Mammary epithelial cell (primary cell): ENCODE measurements at regions of chrX and their contacts with region 1.

Region 1: DNA sequence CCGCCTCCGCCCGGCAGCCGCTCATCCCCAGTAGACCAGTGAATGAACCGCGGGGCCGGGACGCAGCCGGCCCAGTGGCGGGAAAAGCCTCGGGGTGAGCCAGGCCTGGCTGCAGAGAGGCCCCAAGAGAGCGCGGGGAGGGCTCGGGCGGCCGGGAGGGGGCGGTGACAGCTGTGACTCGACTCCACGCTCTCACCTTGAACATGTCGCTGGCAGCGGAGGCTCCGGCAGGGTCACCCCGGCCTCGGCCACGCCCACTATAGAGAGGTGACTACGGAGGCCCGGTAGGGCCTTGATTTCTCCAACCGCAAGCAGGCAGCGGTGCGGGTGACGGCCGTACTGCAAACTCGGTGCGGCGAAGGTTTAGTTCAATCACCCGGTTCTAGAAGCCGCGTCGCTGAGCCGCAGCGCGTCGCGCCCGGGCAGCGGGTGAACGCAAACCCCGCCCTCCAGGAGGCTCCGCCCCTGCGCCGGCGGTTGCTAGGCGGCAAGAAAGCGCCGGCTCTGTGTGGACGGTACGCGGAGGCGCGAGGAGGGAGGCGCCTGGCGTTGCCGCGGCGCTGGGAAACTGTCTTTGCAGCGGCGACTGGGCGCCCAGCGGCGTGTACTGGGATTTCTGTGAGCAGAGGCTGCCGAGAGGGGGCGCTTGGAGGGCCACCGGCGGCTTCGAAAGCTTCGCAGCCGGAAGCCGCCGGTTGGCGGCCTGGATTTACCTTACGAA is at the starts of genes APOO and CXorf58:
- DNase-seq: peak; percentile 90
- H3K4me3 ChIP-seq: peak within 1 kb of the TSS; percentile 56 to 57 (median 56)
- H3K27ac ChIP-seq: peak within 1 kb of the TSS; percentile 61
- H3K4me1 ChIP-seq: no peaks in the 10 kb centered on the region
- H3K27me3 ChIP-seq: no peaks in the 10 kb centered on the region
- CTCF ChIP-seq: peak; percentile 33 to 76
- total RNA-seq, gene APOO: 7.2 to 37.9 TPM
- total RNA-seq, gene CXorf58: 0.17 TPM in 1 of 2 donors, not detected in the other

Region 2: DNA sequence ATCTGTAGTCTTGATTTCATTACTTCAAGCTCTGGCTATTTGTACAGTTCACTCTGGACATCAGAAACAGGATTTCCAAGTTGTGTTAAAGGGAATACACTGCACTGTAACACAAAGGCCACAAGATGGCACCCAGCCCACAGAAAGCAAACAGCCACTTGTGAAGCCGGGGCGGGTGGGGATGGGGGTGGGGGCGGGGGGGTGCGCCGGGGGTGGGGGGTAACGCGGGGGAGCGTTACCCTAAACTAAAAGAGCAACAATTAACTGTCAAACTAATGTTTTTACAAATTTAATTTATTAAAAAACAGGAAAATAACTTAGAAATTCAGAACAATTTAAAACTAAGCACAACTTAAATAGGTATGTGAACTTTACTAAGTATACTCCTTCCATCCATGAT is 213.1 kb before region 1 on chrX:
- CTCF ChIA-PET with region 1: no interaction called
- dilution Hi-C with region 1: no loop called
- in situ Hi-C with region 1: loop called (anchors 5 to 10 kb)
- intact Hi-C with region 1: no loop called
- DNase-seq: peak; percentile 30
- H3K4me3 ChIP-seq: no peak overlapping the region
- H3K27ac ChIP-seq: no peak overlapping the region
- H3K4me1 ChIP-seq: no peaks in the 10 kb centered on the region
- H3K27me3 ChIP-seq: no peaks in the 10 kb centered on the region
- CTCF ChIP-seq: peak; percentile 53 to 61

Region 3: DNA sequence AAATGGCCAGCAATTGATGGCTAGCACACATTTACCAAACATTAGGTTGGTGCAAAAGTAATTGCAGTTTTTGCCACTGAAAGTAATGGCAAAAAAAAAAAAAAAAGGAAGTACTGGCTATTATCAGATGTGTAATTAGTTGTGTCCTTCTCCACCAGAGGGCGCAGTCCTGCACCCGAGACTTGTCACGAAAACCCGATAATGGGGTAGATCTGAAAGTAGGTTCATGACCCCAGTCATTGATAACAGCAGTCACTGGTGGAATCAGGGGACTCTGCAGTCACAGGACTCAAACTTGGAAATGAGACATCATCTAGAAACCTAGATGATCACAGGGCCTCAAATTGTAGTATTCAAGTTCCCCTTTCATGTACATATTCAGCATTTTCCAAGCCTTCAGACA is 151.5 kb before region 1 on chrX:
- CTCF ChIA-PET with region 1: no interaction called
- dilution Hi-C with region 1: no loop called
- in situ Hi-C with region 1: loop called in 1 of 2 experiments (anchors 10 kb)
- intact Hi-C with region 1: no loop called
- DNase-seq: peak; percentile 37
- H3K4me3 ChIP-seq: no peak overlapping the region
- H3K27ac ChIP-seq: no peak overlapping the region
- H3K4me1 ChIP-seq: no peaks in the 10 kb centered on the region
- H3K27me3 ChIP-seq: no peaks in the 10 kb centered on the region
- CTCF ChIP-seq: peak; percentile 58 to 66

Region 4: GRCh38 chrX:23896981-23897380 is 10.7 kb before region 1 on chrX:
- CTCF ChIA-PET with region 1: no interaction called
- dilution Hi-C with region 1: no loop called
- in situ Hi-C with region 1: no loop called
- intact Hi-C with region 1: no loop called
- DNase-seq: no peak
- H3K4me3 ChIP-seq: no peak overlapping the region
- H3K27ac ChIP-seq: no peak overlapping the region
- H3K4me1 ChIP-seq: peaks cover 40% of the 10 kb centered on the region
- H3K27me3 ChIP-seq: no peaks in the 10 kb centered on the region
- CTCF ChIP-seq: no peak

Region 5: DNA sequence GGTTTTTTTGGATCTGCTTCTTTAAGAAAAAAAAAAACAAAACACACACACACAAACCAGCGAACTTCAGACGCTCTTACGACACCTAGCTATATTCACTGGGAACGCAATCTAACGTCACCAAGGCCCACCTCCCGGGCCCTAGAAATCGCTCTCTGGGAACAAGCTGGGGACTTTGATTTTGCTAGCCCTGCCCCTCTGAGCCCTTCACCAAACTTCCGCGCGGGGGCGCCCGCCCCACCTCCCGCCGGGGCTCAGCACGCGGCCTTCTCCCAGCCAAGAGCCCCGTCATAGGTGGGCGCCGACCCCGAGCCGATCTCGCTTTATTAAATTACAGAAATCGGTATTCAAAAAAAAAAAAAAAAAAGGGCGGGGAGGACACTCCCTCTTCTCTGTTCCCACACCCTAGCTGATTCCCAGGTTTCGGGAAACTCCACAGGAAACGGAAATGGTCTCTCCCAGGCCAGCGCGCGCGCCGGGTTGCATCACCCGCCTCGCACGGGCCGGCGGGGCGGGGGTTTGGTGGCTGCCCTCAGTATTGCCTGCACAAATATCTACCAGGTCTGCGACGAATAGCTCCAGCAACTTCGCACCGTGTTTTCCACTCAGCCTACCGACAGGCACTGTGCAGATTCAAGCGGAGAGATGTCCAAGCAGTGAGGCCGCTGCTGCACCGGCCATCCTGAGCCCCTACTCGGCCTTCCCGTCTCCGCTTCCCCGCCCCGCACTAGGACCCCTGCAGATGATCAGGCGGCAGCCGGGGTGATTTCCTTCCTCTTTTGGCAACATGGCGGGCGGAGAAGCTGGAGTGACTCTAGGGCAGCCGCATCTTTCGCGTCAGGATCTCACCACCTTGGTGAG is 146.8 kb after region 1 on chrX and contains the start of gene EIF2S3:
- CTCF ChIA-PET with region 1: interaction called, 3 read pairs
- dilution Hi-C with region 1: no loop called
- in situ Hi-C with region 1: no loop called
- intact Hi-C with region 1: loop called (anchors 1 kb)
- DNase-seq: peak; percentile 96
- H3K4me3 ChIP-seq: no peak within 1 kb of the TSS
- H3K27ac ChIP-seq: no peak within 1 kb of the TSS
- H3K4me1 ChIP-seq: no peaks in the 10 kb centered on the region
- H3K27me3 ChIP-seq: no peaks in the 10 kb centered on the region
- CTCF ChIP-seq: peak; percentile 45 to 65
- total RNA-seq, gene EIF2S3: 299 to 364 TPM

Region 6: GRCh38 chrX:24241822-24242648 is 334.4 kb after region 1 on chrX:
- CTCF ChIA-PET with region 1: no interaction called
- dilution Hi-C with region 1: no loop called
- in situ Hi-C with region 1: no loop called
- intact Hi-C with region 1: loop called (anchors 5 kb)
- DNase-seq: no peak
- H3K4me3 ChIP-seq: no peak overlapping the region
- H3K27ac ChIP-seq: no peak overlapping the region
- H3K4me1 ChIP-seq: peaks cover 14% of the 10 kb centered on the region
- H3K27me3 ChIP-seq: no peaks in the 10 kb centered on the region
- CTCF ChIP-seq: peak; percentile 31 to 45